Cardiac septum (tissue), 1 donor: ENCODE measurements at regions of chr6 and their contacts with region 1.

Region 1: GRCh38 chr6:121055572-121056163 is 278.6 kb downstream of the TBC1D32 start:
- DNase-seq: no peak

Region 2: DNA sequence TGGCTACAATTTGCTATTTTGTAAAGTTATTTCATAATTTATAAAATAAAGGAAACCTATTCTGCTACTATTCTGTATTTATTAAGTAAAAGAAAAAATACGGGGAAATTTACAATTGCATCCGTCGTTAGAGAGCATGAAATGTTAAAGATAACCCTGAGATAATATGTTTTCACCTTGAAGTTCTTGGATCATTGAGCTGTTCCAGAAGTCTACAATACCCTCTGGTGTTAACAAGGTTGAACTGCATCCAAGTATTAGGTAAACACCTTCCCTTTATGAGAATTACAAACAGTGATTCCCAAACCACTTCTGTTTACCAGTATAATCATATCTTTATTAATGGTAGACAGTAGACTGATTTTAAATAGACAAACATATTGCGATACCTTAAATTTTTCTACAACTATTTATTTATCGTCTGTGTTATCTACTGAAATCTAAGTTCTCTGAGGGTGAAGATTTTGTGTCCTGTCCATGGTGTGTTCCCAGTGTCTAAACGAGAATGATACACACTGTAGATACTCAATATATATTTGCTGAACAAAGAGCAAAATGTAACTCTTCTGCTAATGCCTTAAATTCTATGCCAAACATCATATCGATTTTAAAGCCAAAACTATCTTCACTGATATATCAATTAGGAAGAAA is 250.4 kb after region 1 on chr6:
- intact Hi-C with region 1: loop called (anchors 10 kb)
- DNase-seq: no peak

Region 3: GRCh38 chr6:122202576-122203137 is 1147.0 kb after region 1 on chr6:
- intact Hi-C with region 1: loop called (anchors 10 kb)
- DNase-seq: no peak